Right cardiac atrium (tissue), 5 donors: ENCODE measurements at regions of chr3 and their contacts with region 1.

Region 1: GRCh38 chr3:38834110-38834509 is 18.1 kb upstream of the SCN10A start:
- DNase-seq: peak; percentile 74 to 84 (median 82)
- ATAC-seq: peak; percentile 76 to 94
- H3K4me3 ChIP-seq: no peak overlapping the region
- H3K27ac ChIP-seq: no peak overlapping the region
- H3K4me1 ChIP-seq: peaks cover 3% of the 10 kb centered on the region
- H3K27me3 ChIP-seq: no peaks in the 10 kb centered on the region

Region 2: GRCh38 chr3:38154033-38154494 is 680.0 kb before region 1 on chr3:
- intact Hi-C with region 1: no loop called
- DNase-seq: no peak
- ATAC-seq: peak in 1 of 2 donors; percentile 37
- H3K4me3 ChIP-seq: no peak overlapping the region
- H3K27ac ChIP-seq: no peak overlapping the region
- H3K4me1 ChIP-seq: no peaks in the 10 kb centered on the region
- H3K27me3 ChIP-seq: no peaks in the 10 kb centered on the region

Region 3: GRCh38 chr3:38689774-38690173 is 144.3 kb before region 1 on chr3:
- intact Hi-C with region 1: loop called in 1 of 4 experiments (anchors 10 kb)
- DNase-seq: no peak
- ATAC-seq: peak in 1 of 2 donors; percentile 52
- H3K4me3 ChIP-seq: no peak overlapping the region
- H3K27ac ChIP-seq: no peak overlapping the region
- H3K4me1 ChIP-seq: no peaks in the 10 kb centered on the region
- H3K27me3 ChIP-seq: no peaks in the 10 kb centered on the region

Region 4: GRCh38 chr3:38916706-38917105 is 82.6 kb after region 1 on chr3:
- intact Hi-C with region 1: no loop called
- DNase-seq: no peak
- ATAC-seq: no peak
- H3K4me3 ChIP-seq: no peak overlapping the region
- H3K27ac ChIP-seq: no peak overlapping the region
- H3K4me1 ChIP-seq: no peaks in the 10 kb centered on the region
- H3K27me3 ChIP-seq: no peaks in the 10 kb centered on the region